OCI-LY7 (cell line): ENCODE measurements at regions of chr21 and their contacts with region 1.

Region 1: DNA sequence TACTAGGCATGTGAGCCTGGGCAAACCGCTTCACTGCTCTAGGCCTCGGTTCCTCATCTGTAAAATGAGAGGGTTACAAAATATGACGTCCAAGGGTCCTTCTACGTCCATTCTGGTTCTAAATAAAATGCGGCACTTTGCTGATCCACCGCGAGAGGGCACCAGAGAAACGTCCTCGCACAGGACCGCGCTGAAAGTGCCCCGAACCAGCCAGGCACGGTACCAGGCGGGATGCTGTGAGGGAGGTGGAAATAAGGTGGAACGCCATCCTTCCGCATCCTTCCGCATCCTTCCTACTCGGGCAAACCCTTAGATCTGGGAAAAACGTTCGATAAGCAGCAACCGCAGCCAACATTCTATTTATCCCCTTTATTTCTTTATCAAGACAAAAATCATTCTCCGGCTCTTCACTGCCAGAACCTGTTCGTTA is 60.3 kb upstream of the KRTAP19-8 start:
- DNase-seq: peak; percentile 64
- H3K4me3 ChIP-seq: no peak overlapping the region
- H3K27ac ChIP-seq: no peak overlapping the region
- H3K4me1 ChIP-seq: peaks cover 10% of the 10 kb centered on the region
- CTCF ChIP-seq: peak; percentile 96

Region 2: GRCh38 chr21:31119199-31119598 is 20.6 kb after region 1 on chr21:
- CTCF ChIA-PET with region 1: no interaction called
- POLR2A ChIA-PET with region 1: no interaction called
- intact Hi-C with region 1: loop called (anchors 2 kb)
- DNase-seq: no peak
- H3K4me3 ChIP-seq: no peak overlapping the region
- H3K27ac ChIP-seq: no peak overlapping the region
- H3K4me1 ChIP-seq: no peaks in the 10 kb centered on the region
- CTCF ChIP-seq: no peak

Region 3: GRCh38 chr21:31180256-31181081 is 81.9 kb after region 1 on chr21:
- CTCF ChIA-PET with region 1: interaction called, 3 read pairs
- POLR2A ChIA-PET with region 1: interaction called, 4 read pairs
- intact Hi-C with region 1: loop called (anchors 2 kb)
- DNase-seq: peak; percentile 51
- H3K4me3 ChIP-seq: no peak overlapping the region
- H3K27ac ChIP-seq: no peak overlapping the region
- H3K4me1 ChIP-seq: no peaks in the 10 kb centered on the region
- CTCF ChIP-seq: peak; percentile 88

Region 4: GRCh38 chr21:31580866-31581276 is 482.3 kb after region 1 on chr21:
- CTCF ChIA-PET with region 1: interaction called, 4 read pairs
- POLR2A ChIA-PET with region 1: interaction called, 3 read pairs
- intact Hi-C with region 1: loop called (anchors 1 kb)
- DNase-seq: peak; percentile 77
- H3K4me3 ChIP-seq: no peak overlapping the region
- H3K27ac ChIP-seq: no peak overlapping the region
- H3K4me1 ChIP-seq: no peaks in the 10 kb centered on the region
- CTCF ChIP-seq: peak; percentile 87

Region 5: GRCh38 chr21:31604591-31605190 is 506.1 kb after region 1 on chr21:
- CTCF ChIA-PET with region 1: no interaction called
- POLR2A ChIA-PET with region 1: no interaction called
- intact Hi-C with region 1: loop called (anchors 1 kb)
- DNase-seq: peak; percentile 83
- H3K4me3 ChIP-seq: no peak overlapping the region
- H3K27ac ChIP-seq: no peak overlapping the region
- H3K4me1 ChIP-seq: no peaks in the 10 kb centered on the region
- CTCF ChIP-seq: peak; percentile 97